ENCODE measurements at regions of chr5 and their contacts with region 1.

Region 1: DNA sequence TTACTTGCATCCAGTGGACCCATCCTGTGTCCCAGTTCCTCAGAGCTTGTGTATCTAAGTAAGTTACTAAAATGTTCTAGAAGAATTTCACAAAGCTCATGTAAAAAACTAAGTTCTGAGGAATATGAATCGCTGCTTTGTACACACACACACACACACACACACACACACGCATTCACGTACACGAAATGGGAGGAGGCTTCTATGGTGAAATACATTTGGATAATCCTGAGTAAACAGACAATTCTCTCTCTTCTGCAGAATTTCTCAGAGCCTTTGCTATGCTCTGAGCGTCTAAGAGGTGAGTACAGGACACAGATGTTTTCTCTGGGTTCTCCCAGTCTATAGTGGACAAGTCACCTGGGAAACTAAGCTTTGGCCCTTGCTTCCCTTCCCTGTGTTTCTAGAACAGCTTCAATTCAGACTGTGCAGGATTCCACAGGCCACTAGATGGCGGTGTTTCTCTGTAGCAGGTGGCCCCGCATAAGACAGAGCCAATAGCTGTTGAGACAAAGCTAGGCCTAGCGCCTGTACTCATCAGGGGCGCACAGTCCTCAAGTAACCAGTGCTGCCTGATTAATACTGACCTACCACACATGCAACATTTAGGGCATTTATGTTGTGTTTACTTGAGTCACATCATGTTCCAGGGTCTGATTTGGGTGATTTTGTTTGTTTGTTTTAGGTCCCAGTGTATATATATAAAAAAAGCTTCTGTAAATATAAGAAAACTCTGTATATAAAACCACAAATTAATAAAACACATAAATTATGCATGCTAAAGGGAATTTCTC is 114.8 kb downstream of the LIFR start:
- DNase-seq: peak; percentile 91
- ATAC-seq: peak; percentile 100
- H3K4me3 Mint-ChIP-seq: no peak overlapping the region
- H3K27ac Mint-ChIP-seq: no peak overlapping the region
- H3K4me1 Mint-ChIP-seq: no peaks in the 10 kb centered on the region
- H3K27me3 Mint-ChIP-seq: peaks cover 42% of the 10 kb centered on the region
- CTCF ChIP-seq: peak; percentile 90

Region 2: GRCh38 chr5:38382898-38383297 is 58.8 kb before region 1 on chr5:
- CTCF ChIA-PET with region 1: interaction called, 14 read pairs
- POLR2A ChIA-PET with region 1: no interaction called
- intact Hi-C with region 1: no loop called
- DNase-seq: peak; percentile 68
- ATAC-seq: peak; percentile 92
- H3K4me3 Mint-ChIP-seq: no peak overlapping the region
- H3K27ac Mint-ChIP-seq: no peak overlapping the region
- H3K4me1 Mint-ChIP-seq: peaks cover 8% of the 10 kb centered on the region
- H3K27me3 Mint-ChIP-seq: peaks cover 22% of the 10 kb centered on the region
- CTCF ChIP-seq: peak; percentile 66

Region 3: GRCh38 chr5:38463634-38464521 is 22.2 kb after region 1 on chr5:
- CTCF ChIA-PET with region 1: interaction called, 11 read pairs
- POLR2A ChIA-PET with region 1: no interaction called
- intact Hi-C with region 1: no loop called
- DNase-seq: no peak
- ATAC-seq: no peak
- H3K4me3 Mint-ChIP-seq: no peak overlapping the region
- H3K27ac Mint-ChIP-seq: no peak overlapping the region
- H3K4me1 Mint-ChIP-seq: no peaks in the 10 kb centered on the region
- H3K27me3 Mint-ChIP-seq: peaks cover 42% of the 10 kb centered on the region
- CTCF ChIP-seq: no peak

Region 4: GRCh38 chr5:38533286-38534155 is 91.9 kb after region 1 on chr5:
- CTCF ChIA-PET with region 1: interaction called, 10 read pairs
- POLR2A ChIA-PET with region 1: no interaction called
- intact Hi-C with region 1: no loop called
- DNase-seq: no peak
- ATAC-seq: no peak
- H3K4me3 Mint-ChIP-seq: no peak overlapping the region
- H3K27ac Mint-ChIP-seq: no peak overlapping the region
- H3K4me1 Mint-ChIP-seq: no peaks in the 10 kb centered on the region
- H3K27me3 Mint-ChIP-seq: peaks cover 10% of the 10 kb centered on the region
- CTCF ChIP-seq: no peak

Region 5: GRCh38 chr5:38562444-38562843 is 120.8 kb after region 1 on chr5:
- CTCF ChIA-PET with region 1: interaction called, 10 read pairs
- POLR2A ChIA-PET with region 1: no interaction called
- intact Hi-C with region 1: no loop called
- DNase-seq: no peak
- ATAC-seq: no peak
- H3K4me3 Mint-ChIP-seq: no peak overlapping the region
- H3K27ac Mint-ChIP-seq: no peak overlapping the region
- H3K4me1 Mint-ChIP-seq: no peaks in the 10 kb centered on the region
- H3K27me3 Mint-ChIP-seq: peaks cover 40% of the 10 kb centered on the region
- CTCF ChIP-seq: no peak

Region 6: DNA sequence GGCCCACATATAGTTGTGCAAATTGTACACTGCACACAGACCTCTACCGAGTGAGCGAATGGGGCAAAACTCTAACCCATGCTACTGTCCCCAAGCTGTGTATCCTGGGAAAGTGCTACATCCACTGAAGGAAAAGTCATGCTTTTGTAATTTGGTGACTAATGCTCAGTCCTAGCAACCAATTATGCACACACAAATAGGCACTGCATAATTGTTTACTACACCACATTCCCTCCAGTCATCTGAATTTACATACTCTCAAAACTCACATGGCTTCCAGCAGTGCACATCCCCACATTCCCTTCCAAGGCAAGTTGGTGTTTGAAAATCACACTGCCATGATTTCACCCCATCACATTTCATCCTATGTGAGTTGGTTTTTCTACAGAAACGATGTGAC is 278.3 kb after region 1 on chr5:
- CTCF ChIA-PET with region 1: no interaction called
- POLR2A ChIA-PET with region 1: no interaction called
- intact Hi-C with region 1: no loop called
- DNase-seq: no peak
- ATAC-seq: no peak
- H3K4me3 Mint-ChIP-seq: no peak overlapping the region
- H3K27ac Mint-ChIP-seq: no peak overlapping the region
- H3K4me1 Mint-ChIP-seq: no peaks in the 10 kb centered on the region
- H3K27me3 Mint-ChIP-seq: peaks cover 17% of the 10 kb centered on the region
- CTCF ChIP-seq: no peak

Region 7: DNA sequence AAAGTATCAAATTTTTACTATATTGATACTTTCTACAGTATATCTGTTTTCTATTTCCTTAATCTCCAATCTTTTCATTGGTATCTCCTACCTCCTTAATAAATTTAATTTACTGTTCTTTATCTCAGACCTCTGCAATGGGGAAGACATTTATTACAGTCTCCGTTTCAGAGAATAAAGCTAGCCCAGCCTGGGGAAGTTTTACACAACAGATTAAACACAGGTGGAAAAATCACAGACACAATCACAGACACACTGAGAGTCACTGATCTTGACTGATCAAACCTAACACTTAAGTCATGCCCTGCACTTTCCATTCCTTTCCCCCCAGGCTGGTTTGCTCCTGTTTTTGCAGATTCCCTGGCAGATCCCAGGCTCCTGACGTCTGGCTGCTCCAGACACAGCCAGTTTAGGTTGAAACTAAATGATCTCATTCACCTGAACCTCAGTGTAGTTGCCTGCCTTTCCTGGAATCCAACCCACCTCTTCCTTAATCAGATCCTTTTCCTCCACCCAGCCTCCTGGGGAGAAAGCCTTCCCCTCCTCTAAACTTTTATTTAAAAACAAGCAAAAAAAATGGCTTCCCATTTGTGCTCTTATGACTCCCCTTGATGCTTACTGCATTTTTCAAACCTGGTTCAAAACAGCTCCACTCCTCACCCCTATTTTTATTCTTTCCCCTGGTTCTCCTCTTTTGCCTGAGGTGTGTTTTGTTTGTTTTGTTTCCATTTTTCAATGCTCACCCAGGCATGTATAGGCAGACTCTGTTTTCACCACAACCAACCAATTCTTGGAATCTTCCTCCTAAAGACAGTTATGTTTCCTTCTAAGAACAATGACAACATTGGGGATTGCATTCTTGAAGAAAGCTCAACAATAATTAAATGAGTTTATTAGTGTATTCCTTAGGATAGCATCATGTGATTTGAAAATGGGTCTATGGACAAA is 374.7 kb after region 1 on chr5:
- CTCF ChIA-PET with region 1: interaction called, 94 read pairs
- POLR2A ChIA-PET with region 1: no interaction called
- intact Hi-C with region 1: no loop called
- DNase-seq: no peak
- ATAC-seq: no peak
- H3K4me3 Mint-ChIP-seq: no peak overlapping the region
- H3K27ac Mint-ChIP-seq: no peak overlapping the region
- H3K4me1 Mint-ChIP-seq: no peaks in the 10 kb centered on the region
- H3K27me3 Mint-ChIP-seq: peaks cover 37% of the 10 kb centered on the region
- CTCF ChIP-seq: no peak

Measured in activated CD8-positive, alpha-beta T cell treated with anti-CD3 and anti-CD28 coated beads for 36 hours (primary cell).